ENCODE measurements at regions of chr10 and their contacts with region 1.

Region 1: GRCh38 chr10:30783939-30784500 is 154.5 kb upstream of the LYZL2 start:
- DNase-seq: peak; percentile 77 to 81
- ATAC-seq: peak; percentile 68 to 80
- H3K4me3 ChIP-seq: peak overlapping the region; percentile 55 to 91 (median 77)
- H3K27ac ChIP-seq: peak overlapping the region; percentile 82 to 90 (median 87)
- H3K4me1 ChIP-seq: peaks cover 3 to 12% of the 10 kb centered on the region in 2 donors
- H3K27me3 ChIP-seq: no peaks in the 10 kb centered on the region
- CTCF ChIP-seq: peak; percentile 82 to 92 (median 91)
- POLR2A ChIP-seq: no peak

Region 2: GRCh38 chr10:30608386-30608785 is 175.6 kb before region 1 on chr10:
- in situ Hi-C with region 1: no loop called
- intact Hi-C with region 1: no loop called
- DNase-seq: no peak
- ATAC-seq: no peak
- H3K4me3 ChIP-seq: no peak overlapping the region
- H3K27ac ChIP-seq: no peak overlapping the region
- H3K4me1 ChIP-seq: no peaks in the 10 kb centered on the region
- H3K27me3 ChIP-seq: no peaks in the 10 kb centered on the region
- CTCF ChIP-seq: no peak
- POLR2A ChIP-seq: no peak

Region 3: GRCh38 chr10:30840406-30841050 is 56.5 kb after region 1 on chr10:
- in situ Hi-C with region 1: no loop called
- intact Hi-C with region 1: loop called (anchors 5 kb)
- DNase-seq: peak in 1 of 2 donors; percentile 67
- ATAC-seq: peak; percentile 70 to 71
- H3K4me3 ChIP-seq: peak overlapping the region in 1 of 4 donors; percentile 29
- H3K27ac ChIP-seq: peak overlapping the region; percentile 42 to 69 (median 56)
- H3K4me1 ChIP-seq: peaks cover 36 to 40% of the 10 kb centered on the region in 2 donors
- H3K27me3 ChIP-seq: no peaks in the 10 kb centered on the region
- CTCF ChIP-seq: no peak
- POLR2A ChIP-seq: no peak

Region 4: DNA sequence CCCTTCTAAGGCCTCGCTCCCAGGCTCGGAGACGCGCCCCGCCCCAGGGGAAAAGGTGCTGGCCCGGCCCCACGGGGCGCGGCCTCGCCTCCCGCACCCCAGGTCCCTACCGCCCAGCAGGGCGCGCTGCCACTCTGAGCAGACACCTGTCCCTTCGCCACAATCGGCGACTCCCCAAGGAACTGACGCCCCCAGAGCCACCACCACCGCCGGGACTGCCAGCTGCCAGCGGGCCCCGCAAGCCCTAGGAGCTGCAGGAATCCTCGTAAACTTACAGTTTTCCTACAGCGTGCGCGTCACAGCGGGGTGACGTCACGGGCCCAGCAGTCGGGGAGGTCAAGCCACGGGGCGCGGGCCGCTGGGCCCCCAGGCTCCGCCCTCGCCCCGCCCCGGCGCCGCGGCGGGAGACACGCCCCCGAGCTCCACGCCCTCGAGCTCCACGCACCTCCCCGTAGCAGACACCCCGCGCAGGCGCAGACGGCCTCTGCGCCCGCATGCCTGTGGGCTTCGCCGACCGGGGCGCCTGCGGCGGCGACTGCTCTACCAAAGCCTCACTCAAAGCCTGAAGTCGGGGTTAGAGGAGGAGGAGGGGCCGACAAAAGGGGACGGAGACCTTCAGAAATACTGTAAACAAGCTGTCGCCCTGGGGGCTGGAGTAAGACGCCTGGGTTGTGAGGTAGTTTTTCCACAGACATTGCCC is 247.7 kb after region 1 on chr10 and contains the start of gene ZNF438:
- in situ Hi-C with region 1: loop called in 2 of 4 experiments (anchors 5 to 10 kb)
- intact Hi-C with region 1: loop called (anchors 2 kb)
- DNase-seq: peak; percentile 90 to 95
- ATAC-seq: peak; percentile 75 to 79
- H3K4me3 ChIP-seq: peak within 1 kb of the TSS; percentile 72 to 87 (median 75)
- H3K27ac ChIP-seq: peak within 1 kb of the TSS; percentile 99 to 100 (median 100)
- H3K4me1 ChIP-seq: peaks cover 28 to 61% of the 10 kb centered on the region in 2 donors
- H3K27me3 ChIP-seq: no peaks in the 10 kb centered on the region
- CTCF ChIP-seq: peak; percentile 67 to 76 (median 72)
- POLR2A ChIP-seq: peak; percentile 95
- total RNA-seq, gene ZNF438: 14.4 to 37.0 (median 26.5) TPM

Region 5: DNA sequence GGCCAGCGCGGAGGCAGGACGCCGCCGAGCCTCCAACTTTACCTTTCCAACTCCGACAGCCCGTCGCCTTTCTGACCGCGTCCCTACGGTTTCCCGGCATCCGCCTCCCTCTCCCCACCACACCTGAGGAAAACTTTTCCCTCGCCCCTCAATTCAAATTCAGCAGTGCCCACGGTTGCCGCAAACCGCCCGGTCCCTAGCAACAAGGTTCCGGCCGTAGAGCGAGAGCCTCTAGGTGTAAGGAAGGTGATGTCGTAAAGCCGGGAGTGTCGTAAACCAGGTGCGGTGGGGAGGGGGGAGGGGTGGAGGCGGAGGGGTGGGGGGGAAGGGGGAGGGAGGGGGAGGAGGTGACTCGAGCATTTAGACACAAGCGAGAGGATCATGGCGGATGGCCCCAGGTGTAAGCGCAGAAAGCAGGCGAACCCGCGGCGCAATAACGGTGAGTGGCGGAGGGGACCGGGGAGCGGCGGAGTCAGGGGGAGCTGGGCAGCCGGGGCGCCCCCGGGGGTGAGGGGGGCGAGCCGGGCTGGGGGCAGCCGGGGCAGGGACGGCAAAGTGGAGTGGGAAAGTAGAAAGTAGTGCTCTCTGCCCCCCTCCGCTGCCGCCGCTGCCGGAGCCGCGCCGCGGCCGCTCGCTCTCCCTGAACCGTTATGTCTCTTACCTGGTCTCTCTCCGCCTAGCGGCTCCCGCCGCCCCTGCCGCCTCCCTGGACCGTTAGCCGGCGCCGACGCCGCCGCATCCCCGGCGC is 535.0 kb after region 1 on chr10 and contains the start of gene ZEB1:
- in situ Hi-C with region 1: loop called (anchors 10 to 25 kb)
- intact Hi-C with region 1: loop called (anchors 1 kb)
- DNase-seq: peak; percentile 89 to 92
- ATAC-seq: peak; percentile 56 to 75
- H3K4me3 ChIP-seq: peak within 1 kb of the TSS; percentile 91 to 96 (median 94)
- H3K27ac ChIP-seq: peak within 1 kb of the TSS; percentile 97 to 99 (median 98)
- H3K4me1 ChIP-seq: peaks cover 29 to 50% of the 10 kb centered on the region in 2 donors
- H3K27me3 ChIP-seq: no peaks in the 10 kb centered on the region
- CTCF ChIP-seq: peak; percentile 56 to 74 (median 66)
- POLR2A ChIP-seq: peak; percentile 61 to 77
- total RNA-seq, gene ZEB1: 67.4 to 175 (median 137) TPM

Region 6: GRCh38 chr10:31490858-31491504 is 707.0 kb after region 1 on chr10:
- in situ Hi-C with region 1: loop called in 2 of 4 experiments (anchors 10 to 25 kb)
- intact Hi-C with region 1: loop called (anchors 2 kb)
- DNase-seq: no peak
- ATAC-seq: peak; percentile 73 to 83
- H3K4me3 ChIP-seq: no peak overlapping the region
- H3K27ac ChIP-seq: peak overlapping the region in 1 of 4 donors; percentile 7
- H3K4me1 ChIP-seq: no peaks in the 10 kb centered on the region
- H3K27me3 ChIP-seq: no peaks in the 10 kb centered on the region
- CTCF ChIP-seq: peak; percentile 50 to 66 (median 60)
- POLR2A ChIP-seq: no peak

Region 7: DNA sequence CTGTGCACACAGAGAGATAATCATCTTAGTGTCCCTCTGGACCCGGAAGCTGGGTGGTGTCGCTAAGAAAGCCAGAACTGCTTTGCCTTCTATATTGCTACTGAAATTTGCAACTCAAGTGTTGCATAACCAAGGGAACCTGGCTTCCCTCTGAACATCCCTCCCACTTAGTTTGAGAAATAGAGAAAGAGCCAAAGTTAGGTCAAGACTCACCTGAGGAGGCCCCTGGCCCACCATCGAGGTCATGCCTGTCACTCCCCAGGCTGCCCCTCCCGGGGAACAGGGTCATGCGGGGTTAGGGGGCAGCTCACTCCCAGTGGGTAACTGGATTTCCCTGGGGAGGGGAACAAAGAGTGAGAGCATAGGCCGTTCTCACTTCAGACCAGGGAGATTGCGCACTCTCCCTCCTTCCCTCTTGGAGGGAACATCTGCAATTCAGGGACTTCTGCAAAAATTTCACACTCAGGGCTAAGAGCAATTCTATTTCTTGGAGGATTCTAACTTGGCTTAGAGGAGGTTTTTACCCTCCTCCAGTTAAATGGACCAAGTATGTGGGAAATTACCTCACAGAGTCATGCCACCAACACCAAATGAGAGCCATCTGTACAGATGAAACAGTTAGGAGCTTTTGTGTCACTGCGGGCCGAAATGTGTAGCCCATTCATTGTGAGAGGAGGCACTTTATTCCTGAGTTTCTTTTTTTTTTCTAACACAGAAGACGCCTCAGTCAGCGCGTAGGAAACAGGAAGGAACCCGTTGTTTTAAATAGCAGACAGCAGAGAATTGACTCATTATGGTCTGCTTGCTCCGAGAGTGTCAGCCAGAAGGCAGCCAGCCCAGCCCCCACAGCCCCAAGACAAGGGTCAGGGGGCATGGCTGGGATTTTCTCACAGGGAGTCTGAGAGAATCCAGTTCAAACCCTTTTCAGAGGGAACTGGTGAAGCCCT is 923.3 kb after region 1 on chr10:
- in situ Hi-C with region 1: no loop called
- intact Hi-C with region 1: loop called (anchors 10 kb)
- DNase-seq: peak; percentile 37 to 46
- ATAC-seq: peak; percentile 5 to 24
- H3K4me3 ChIP-seq: peak overlapping the region in 1 of 4 donors; percentile 21
- H3K27ac ChIP-seq: peak overlapping the region; percentile 83 to 94 (median 88)
- H3K4me1 ChIP-seq: peaks cover 35 to 41% of the 10 kb centered on the region in 2 donors
- H3K27me3 ChIP-seq: no peaks in the 10 kb centered on the region
- CTCF ChIP-seq: no peak
- POLR2A ChIP-seq: peak in 1 of 2 donors; percentile 18

Region 8: DNA sequence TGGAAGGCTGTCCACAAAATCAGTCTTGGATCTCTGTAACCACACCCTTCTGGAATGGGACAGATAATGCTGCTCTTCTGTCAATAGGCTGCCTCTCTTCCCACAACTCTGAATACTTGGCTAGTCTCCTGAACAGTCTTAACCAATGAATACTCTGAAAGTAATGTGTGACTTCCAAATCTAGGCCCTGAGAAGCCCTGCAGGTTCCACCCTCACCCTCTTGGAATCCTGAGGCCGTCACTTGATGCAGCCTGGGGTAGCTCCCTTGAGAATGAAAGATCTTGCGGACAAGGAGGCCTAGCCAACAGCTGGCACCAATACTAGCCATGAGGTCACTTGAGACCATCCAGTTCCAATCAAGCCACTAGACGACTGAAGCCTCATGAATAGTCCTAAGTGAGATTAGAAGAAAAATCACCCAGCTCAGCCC is 1035.4 kb after region 1 on chr10:
- in situ Hi-C with region 1: loop called in 1 of 4 experiments (anchors 10 kb)
- intact Hi-C with region 1: no loop called
- DNase-seq: peak; percentile 6 to 62
- ATAC-seq: peak; percentile 42 to 51
- H3K4me3 ChIP-seq: no peak overlapping the region
- H3K27ac ChIP-seq: peak overlapping the region in 3 of 4 donors; percentile 12 to 39 (median 19)
- H3K4me1 ChIP-seq: peaks cover 19 to 24% of the 10 kb centered on the region in 2 donors
- H3K27me3 ChIP-seq: no peaks in the 10 kb centered on the region
- CTCF ChIP-seq: no peak
- POLR2A ChIP-seq: no peak

Measured in gastrocnemius medialis (tissue), 4 donors.